PC-9 (cell line): ENCODE measurements at regions of chr5 and their contacts with region 1.

Region 1: GRCh38 chr5:32785611-32786216 is 74.6 kb downstream of the NPR3 start:
- DNase-seq: peak; percentile 91 to 96
- H3K4me3 ChIP-seq: peak overlapping the region; percentile 25; the same call in 1 of the 2 replicates
- H3K27ac ChIP-seq: peak overlapping the region; percentile 77
- H3K4me1 ChIP-seq: peaks cover 28% of the 10 kb centered on the region
- H3K27me3 ChIP-seq: peaks cover 45% of the 10 kb centered on the region
- CTCF ChIP-seq: no peak

Region 2: DNA sequence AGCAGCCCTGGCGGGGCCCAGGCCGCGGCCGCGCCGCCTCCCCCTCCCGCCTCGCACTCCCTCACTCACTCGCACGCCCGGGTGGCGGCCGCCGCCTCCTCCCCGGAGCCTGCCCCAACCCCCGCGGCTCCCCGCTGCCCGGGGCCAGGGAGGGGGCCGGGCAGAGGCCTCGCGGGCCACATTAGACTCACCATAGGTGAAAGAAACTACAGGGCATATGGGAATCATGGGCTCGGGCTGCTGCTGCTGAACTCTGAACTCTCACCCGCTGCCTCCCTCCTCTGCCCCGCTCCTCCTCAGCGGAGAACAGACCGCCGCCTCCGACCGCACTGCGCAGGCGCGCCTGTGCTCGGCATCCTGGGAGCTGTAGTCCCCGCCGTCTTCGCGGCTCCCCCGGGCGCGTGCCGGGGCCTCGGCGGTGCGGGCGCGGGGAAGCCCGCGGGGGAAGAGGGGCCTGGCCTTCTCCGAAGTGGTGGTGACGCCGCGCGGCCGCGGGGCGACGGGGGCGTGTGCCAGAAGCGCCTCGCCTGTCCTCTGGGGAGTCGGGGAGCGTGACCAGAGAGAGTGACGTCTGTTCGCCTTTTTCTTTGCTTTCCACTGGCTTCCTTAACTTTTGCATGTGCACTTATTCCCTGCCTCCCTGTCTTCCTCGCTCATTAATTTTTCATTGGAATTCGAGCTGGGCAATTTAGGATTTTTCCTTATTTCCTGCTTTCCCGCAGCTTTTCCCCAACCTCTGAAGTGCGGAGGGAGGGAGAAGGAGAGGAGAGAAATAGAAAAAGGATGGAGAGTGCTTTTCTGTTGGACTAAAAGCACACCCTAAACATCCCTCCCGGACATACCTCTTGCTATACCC is 341.1 kb before region 1 on chr5 and contains the start of gene ZFR:
- CTCF ChIA-PET with region 1: no interaction called
- POLR2A ChIA-PET with region 1: no interaction called
- intact Hi-C with region 1: loop called (anchors 10 kb)
- DNase-seq: peak; percentile 77 to 98
- H3K4me3 ChIP-seq: peak within 1 kb of the TSS; percentile 83
- H3K27ac ChIP-seq: peak within 1 kb of the TSS; percentile 61
- H3K4me1 ChIP-seq: peaks cover 40% of the 10 kb centered on the region
- H3K27me3 ChIP-seq: no peaks in the 10 kb centered on the region
- CTCF ChIP-seq: no peak
- total RNA-seq, gene ZFR: 51.8 and 69.2 TPM in 2 replicates

Region 3: GRCh38 chr5:32767948-32768427 is 17.7 kb before region 1 on chr5:
- CTCF ChIA-PET with region 1: interaction called, 5 read pairs
- POLR2A ChIA-PET with region 1: no interaction called
- intact Hi-C with region 1: loop called (anchors 1 kb)
- DNase-seq: peak; percentile 89 to 97
- H3K4me3 ChIP-seq: peak overlapping the region; percentile 6; the same call in 1 of the 2 replicates
- H3K27ac ChIP-seq: peak overlapping the region; percentile 74
- H3K4me1 ChIP-seq: peaks cover 18% of the 10 kb centered on the region
- H3K27me3 ChIP-seq: no peaks in the 10 kb centered on the region
- CTCF ChIP-seq: no peak

Region 4: GRCh38 chr5:32880796-32881195 is 95.1 kb after region 1 on chr5:
- CTCF ChIA-PET with region 1: no interaction called
- POLR2A ChIA-PET with region 1: interaction called, 11 read pairs
- intact Hi-C with region 1: no loop called
- DNase-seq: no peak
- H3K4me3 ChIP-seq: no peak overlapping the region
- H3K27ac ChIP-seq: no peak overlapping the region
- H3K4me1 ChIP-seq: no peaks in the 10 kb centered on the region
- H3K27me3 ChIP-seq: no peaks in the 10 kb centered on the region
- CTCF ChIP-seq: no peak

Region 5: GRCh38 chr5:33272288-33272687 is 486.6 kb after region 1 on chr5:
- CTCF ChIA-PET with region 1: no interaction called
- POLR2A ChIA-PET with region 1: no interaction called
- intact Hi-C with region 1: loop called (anchors 10 kb)
- DNase-seq: peak; percentile 30 to 80
- H3K4me3 ChIP-seq: no peak overlapping the region
- H3K27ac ChIP-seq: peak overlapping the region; percentile 62
- H3K4me1 ChIP-seq: peaks cover 14% of the 10 kb centered on the region; the same call in 1 of the 2 replicates
- H3K27me3 ChIP-seq: no peaks in the 10 kb centered on the region
- CTCF ChIP-seq: no peak